ENCODE measurements at regions of chr3 and their contacts with region 1.

Region 1: GRCh38 chr3:196149831-196150521 is 61.2 kb downstream of the ZDHHC19 start:
- DNase-seq: no peak
- H3K4me3 ChIP-seq: no peak overlapping the region
- H3K27ac ChIP-seq: no peak overlapping the region
- H3K4me1 ChIP-seq: peaks cover 28% of the 10 kb centered on the region
- H3K27me3 ChIP-seq: no peaks in the 10 kb centered on the region
- CTCF ChIP-seq: no peak

Region 2: DNA sequence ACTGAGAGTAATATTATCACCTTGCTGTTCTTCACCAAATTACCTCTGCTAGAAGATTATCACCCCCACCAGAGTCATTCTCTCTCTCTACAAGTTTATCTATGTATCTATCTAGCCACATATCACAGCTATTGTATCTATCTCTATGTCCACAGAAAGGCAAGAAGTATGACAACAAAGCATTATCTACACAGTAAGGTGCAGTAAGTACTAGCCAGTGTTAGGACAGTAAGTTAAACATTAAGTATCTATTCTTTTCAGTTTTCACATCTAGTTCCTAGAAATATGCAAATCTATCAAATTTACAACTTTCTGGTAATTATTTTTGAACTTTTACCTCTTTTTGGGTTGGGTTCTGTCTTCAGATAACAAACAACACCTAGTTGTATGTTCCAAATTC is 852.5 kb before region 1 on chr3:
- CTCF ChIA-PET with region 1: no interaction called
- POLR2A ChIA-PET with region 1: no interaction called
- intact Hi-C with region 1: no loop called
- DNase-seq: no peak
- H3K4me3 ChIP-seq: no peak overlapping the region
- H3K27ac ChIP-seq: no peak overlapping the region
- H3K4me1 ChIP-seq: no peaks in the 10 kb centered on the region
- H3K27me3 ChIP-seq: no peaks in the 10 kb centered on the region
- CTCF ChIP-seq: no peak

Region 3: DNA sequence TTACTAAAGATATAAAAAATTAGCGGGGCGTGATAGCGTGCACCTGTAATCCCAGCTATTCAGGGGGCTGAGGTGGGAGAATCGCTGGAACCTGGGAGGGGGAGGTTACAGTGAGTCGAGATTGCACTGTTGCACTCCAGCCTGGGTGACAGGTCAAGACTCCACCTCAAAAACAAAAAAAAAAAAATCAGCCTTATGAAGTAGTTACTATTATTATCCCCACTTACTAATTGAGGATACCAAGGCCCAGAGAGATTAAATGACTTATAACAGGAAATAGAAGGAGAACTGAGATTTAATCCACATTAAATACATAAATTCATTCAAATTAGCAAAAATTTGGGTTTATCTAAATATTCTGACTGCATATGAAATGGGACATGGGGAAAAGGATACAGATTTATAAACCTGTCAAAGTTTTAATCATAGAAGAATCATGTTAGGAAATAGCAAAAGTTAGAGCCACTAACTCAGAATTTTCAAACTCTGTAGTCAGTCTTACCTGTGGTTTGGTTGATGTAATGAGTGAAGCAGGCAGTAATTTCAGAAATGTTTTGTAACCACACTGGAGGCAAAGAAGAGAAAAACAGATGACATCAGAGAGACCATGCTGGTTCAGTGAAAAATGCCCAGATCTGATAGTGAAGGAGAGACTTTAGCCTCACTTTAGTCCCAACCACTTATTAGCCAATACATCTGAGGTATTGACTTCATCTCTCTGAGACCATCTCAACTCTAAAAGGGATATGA is 682.2 kb before region 1 on chr3:
- CTCF ChIA-PET with region 1: no interaction called
- POLR2A ChIA-PET with region 1: no interaction called
- intact Hi-C with region 1: no loop called
- DNase-seq: no peak
- H3K4me3 ChIP-seq: no peak overlapping the region
- H3K27ac ChIP-seq: no peak overlapping the region
- H3K4me1 ChIP-seq: no peaks in the 10 kb centered on the region
- H3K27me3 ChIP-seq: no peaks in the 10 kb centered on the region
- CTCF ChIP-seq: no peak

Region 4: DNA sequence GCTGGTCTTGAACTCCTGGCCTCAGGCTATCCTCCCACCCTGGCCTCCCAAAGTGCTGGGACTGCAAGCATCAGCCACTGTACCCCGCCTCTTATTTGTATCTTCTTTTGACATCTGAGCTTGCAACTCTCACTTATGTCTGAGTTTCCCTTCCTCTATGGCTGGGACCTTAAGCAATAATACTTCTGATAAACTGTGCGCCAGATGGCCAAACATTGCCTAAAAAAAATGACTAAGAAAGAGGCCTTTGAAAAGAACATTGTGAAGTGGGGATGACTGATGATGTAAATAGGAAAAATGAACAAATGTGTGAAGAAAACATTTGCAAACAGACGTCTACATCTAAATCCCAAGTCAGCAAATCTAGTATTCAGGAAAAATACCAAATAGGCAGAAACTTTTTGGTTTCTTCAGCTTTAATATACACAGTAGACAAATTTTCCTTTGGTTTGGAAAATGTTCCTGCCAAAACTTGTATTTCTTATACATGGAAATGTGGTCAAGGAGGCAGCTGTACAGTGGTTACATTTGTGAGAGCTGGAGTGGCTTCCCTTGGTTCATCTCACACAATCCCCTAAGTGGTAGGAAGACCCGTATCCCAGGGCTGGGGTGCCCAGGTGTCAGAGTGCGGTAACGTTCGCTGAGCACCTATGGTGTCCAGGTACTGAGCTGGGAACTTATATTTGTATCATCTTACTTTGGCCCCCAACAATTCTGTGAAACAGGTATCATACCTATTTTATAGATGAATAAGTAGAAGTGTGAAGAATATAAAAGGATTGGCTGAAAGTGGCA is 56.5 kb before region 1 on chr3:
- CTCF ChIA-PET with region 1: no interaction called
- POLR2A ChIA-PET with region 1: interaction called, 21 read pairs
- intact Hi-C with region 1: no loop called
- DNase-seq: peak in 1 of 2 experiments; percentile 4
- H3K4me3 ChIP-seq: no peak overlapping the region
- H3K27ac ChIP-seq: no peak overlapping the region
- H3K4me1 ChIP-seq: no peaks in the 10 kb centered on the region
- H3K27me3 ChIP-seq: no peaks in the 10 kb centered on the region
- CTCF ChIP-seq: no peak

Measured in PC-9 (cell line).